CD4-positive, alpha-beta memory T cell (primary cell): ENCODE measurements at regions of chr6 and their contacts with region 1.

Region 1: GRCh38 chr6:31203345-31203979 is 33.0 kb upstream of the POU5F1 start:
- DNase-seq: peak in 3 of 5 donors; percentile 48 to 86 (median 62)
- H3K4me3 ChIP-seq: peak overlapping the region; percentile 60 to 66
- H3K4me3 Mint-ChIP-seq: peak overlapping the region; percentile 81 to 99 (median 92)
- H3K27ac ChIP-seq: peak overlapping the region; percentile 76
- H3K27ac Mint-ChIP-seq: peak overlapping the region; percentile 92 to 100 (median 97)
- H3K4me1 ChIP-seq: peaks cover 59% of the 10 kb centered on the region
- H3K4me1 Mint-ChIP-seq: peaks cover 46 to 72% (median 56%) of the 10 kb centered on the region in 4 donors
- H3K27me3 ChIP-seq: no peaks in the 10 kb centered on the region
- H3K27me3 Mint-ChIP-seq: no peaks in the 10 kb centered on the region

Region 2: GRCh38 chr6:29477923-29478450 is 1725.5 kb before region 1 on chr6:
- CTCF ChIA-PET with region 1: no interaction called
- POLR2A ChIA-PET with region 1: no interaction called
- intact Hi-C with region 1: no loop called
- DNase-seq: no peak
- H3K4me3 ChIP-seq: no peak overlapping the region
- H3K4me3 Mint-ChIP-seq: no peak overlapping the region
- H3K27ac ChIP-seq: no peak overlapping the region
- H3K27ac Mint-ChIP-seq: no peak overlapping the region
- H3K4me1 ChIP-seq: no peaks in the 10 kb centered on the region
- H3K4me1 Mint-ChIP-seq: no peaks in the 10 kb centered on the region
- H3K27me3 ChIP-seq: no peaks in the 10 kb centered on the region
- H3K27me3 Mint-ChIP-seq: peaks cover 7 to 8% of the 10 kb centered on the region in 2 donors

Region 3: GRCh38 chr6:31271641-31272357 is 68.3 kb after region 1 on chr6 and contains the start of gene HLA-C:
- CTCF ChIA-PET with region 1: interaction called, 4 read pairs
- POLR2A ChIA-PET with region 1: interaction called, 90 read pairs
- intact Hi-C with region 1: loop called (anchors 1 kb)
- DNase-seq: peak; percentile 92 to 98 (median 93)
- H3K4me3 ChIP-seq: peak within 1 kb of the TSS; percentile 88 to 94
- H3K4me3 Mint-ChIP-seq: peak within 1 kb of the TSS; percentile 95 to 100 (median 98)
- H3K27ac ChIP-seq: peak within 1 kb of the TSS; percentile 100
- H3K27ac Mint-ChIP-seq: peak within 1 kb of the TSS; percentile 99 to 100 (median 100)
- H3K4me1 ChIP-seq: peaks cover 51% of the 10 kb centered on the region
- H3K4me1 Mint-ChIP-seq: peaks cover 45 to 77% (median 54%) of the 10 kb centered on the region in 4 donors
- H3K27me3 ChIP-seq: no peaks in the 10 kb centered on the region
- H3K27me3 Mint-ChIP-seq: peaks cover 0 to 2% of the 10 kb centered on the region in 2 donors
- total RNA-seq, gene HLA-C: 1,481 to 1,487 TPM

Region 4: GRCh38 chr6:33040157-33040556 is 1836.7 kb after region 1 on chr6:
- CTCF ChIA-PET with region 1: no interaction called
- POLR2A ChIA-PET with region 1: no interaction called
- intact Hi-C with region 1: no loop called
- DNase-seq: no peak
- H3K4me3 ChIP-seq: no peak overlapping the region
- H3K4me3 Mint-ChIP-seq: no peak overlapping the region
- H3K27ac ChIP-seq: no peak overlapping the region
- H3K27ac Mint-ChIP-seq: no peak overlapping the region
- H3K4me1 ChIP-seq: no peaks in the 10 kb centered on the region
- H3K4me1 Mint-ChIP-seq: no peaks in the 10 kb centered on the region
- H3K27me3 ChIP-seq: peaks cover 3% of the 10 kb centered on the region
- H3K27me3 Mint-ChIP-seq: peaks cover 15 to 36% of the 10 kb centered on the region in 2 donors